Head of caudate nucleus (tissue), 42 donors: ENCODE measurements at regions of chr3 and their contacts with region 1.

Region 1: GRCh38 chr3:129052675-129053074 is 7.9 kb upstream of the GP9 start:
- DNase-seq: peak in 2 of 42 donors; percentile 6 to 28

Region 2: DNA sequence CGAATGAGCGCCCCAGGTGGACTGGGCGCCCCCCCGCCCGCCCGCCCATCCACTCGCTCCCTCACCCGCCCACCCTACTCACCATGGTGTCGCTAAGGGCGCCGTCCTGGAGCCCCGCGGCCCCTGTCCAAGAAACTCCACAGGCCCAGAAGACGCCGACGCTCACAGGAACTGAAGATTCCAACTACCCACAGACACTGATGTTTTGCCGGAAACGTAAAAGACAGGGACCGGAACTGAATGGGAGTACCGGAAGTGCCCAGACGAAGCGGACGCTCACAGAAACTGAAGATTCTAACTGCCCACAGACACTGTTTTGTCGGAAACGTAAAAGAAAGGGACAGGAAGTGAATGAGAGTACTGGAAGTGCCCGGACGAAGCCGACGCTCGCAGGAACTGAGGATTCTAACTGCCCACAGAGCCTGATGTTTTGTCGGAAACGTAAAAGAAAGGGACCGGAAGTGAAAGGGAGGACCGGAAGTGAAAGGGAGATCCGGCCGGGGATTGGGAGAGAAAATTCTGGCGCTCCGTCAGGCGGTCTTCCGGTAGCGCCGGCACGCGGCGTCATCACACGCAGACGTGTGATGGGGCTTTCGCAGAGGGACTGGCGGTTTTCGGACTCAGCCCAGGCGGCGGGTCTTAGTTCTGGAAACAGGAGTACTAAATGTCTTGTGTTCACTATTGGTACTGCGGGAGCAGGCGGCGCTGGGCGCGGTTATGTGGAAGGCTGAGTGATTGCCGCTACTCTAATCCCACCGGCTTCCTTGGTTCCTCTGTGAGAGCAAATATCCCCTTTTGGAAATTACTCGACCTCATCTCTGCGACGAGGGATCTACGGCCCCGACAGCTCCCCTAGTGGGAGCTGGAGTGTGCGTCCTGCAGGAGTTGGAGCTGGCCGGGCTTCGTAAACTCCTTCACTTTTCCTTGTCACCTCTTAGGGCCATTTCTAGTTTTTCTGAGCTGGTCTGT is 108.5 kb after region 1 on chr3 and contains the start of gene ISY1:
- intact Hi-C with region 1: loop called (anchors 5 kb)
- DNase-seq: peak; percentile 76 to 96 (median 88)